ENCODE measurements at regions of chr4 and their contacts with region 1.

Region 1: DNA sequence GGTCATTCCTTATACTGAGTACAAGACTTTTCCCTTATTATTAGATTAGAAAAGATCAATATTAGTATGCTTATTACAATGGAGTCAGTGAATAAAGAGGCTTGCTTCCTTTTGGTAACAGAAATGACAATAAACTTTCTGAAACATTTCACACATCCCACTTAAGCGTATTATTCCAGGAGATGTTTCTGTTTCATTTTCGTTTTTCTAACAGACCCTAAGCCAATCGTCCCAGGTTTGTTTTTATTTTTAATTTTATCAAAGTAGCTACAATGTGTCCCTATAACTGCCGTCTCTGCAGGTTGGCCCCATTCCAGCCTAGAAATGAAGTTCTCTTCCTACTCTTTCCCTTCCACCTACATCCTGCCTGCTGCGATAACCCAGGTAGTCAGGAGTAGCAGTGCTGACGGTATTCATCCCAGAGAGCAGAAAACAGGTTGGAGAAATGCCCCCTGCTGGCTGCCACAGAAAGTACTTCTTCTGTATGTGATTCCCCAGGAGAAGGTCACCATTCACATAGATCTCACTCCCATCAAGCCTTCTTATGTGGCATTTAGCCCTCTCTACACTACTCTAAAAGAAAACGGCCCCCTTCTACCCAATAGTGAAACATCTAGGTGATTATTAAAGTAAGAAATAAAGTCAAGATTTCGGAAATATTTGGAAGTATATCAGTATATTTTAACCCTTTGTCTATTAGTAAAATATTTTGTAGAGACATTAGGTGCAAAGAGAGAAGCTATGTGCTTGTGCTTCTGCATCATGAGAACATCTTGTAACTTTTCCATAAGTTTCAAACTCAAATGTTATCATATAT is 40.4 kb downstream of the ENPEP start:
- DNase-seq: peak; percentile 21
- ATAC-seq: peak; percentile 94
- H3K4me3 Mint-ChIP-seq: peak overlapping the region; percentile 94
- H3K27ac Mint-ChIP-seq: peak overlapping the region; percentile 47
- H3K4me1 Mint-ChIP-seq: peaks cover 13% of the 10 kb centered on the region
- H3K27me3 Mint-ChIP-seq: peaks cover under 1% of the 10 kb centered on the region
- CTCF ChIP-seq: peak; percentile 59

Region 2: GRCh38 chr4:109998867-109999584 is 517.3 kb before region 1 on chr4:
- CTCF ChIA-PET with region 1: interaction called, 232 read pairs
- POLR2A ChIA-PET with region 1: no interaction called
- intact Hi-C with region 1: loop called (anchors 1 kb)
- DNase-seq: no peak
- ATAC-seq: peak; percentile 61
- H3K4me3 Mint-ChIP-seq: no peak overlapping the region
- H3K27ac Mint-ChIP-seq: no peak overlapping the region
- H3K4me1 Mint-ChIP-seq: peaks cover 9% of the 10 kb centered on the region
- H3K27me3 Mint-ChIP-seq: peaks cover 5% of the 10 kb centered on the region
- CTCF ChIP-seq: peak; percentile 66

Region 3: DNA sequence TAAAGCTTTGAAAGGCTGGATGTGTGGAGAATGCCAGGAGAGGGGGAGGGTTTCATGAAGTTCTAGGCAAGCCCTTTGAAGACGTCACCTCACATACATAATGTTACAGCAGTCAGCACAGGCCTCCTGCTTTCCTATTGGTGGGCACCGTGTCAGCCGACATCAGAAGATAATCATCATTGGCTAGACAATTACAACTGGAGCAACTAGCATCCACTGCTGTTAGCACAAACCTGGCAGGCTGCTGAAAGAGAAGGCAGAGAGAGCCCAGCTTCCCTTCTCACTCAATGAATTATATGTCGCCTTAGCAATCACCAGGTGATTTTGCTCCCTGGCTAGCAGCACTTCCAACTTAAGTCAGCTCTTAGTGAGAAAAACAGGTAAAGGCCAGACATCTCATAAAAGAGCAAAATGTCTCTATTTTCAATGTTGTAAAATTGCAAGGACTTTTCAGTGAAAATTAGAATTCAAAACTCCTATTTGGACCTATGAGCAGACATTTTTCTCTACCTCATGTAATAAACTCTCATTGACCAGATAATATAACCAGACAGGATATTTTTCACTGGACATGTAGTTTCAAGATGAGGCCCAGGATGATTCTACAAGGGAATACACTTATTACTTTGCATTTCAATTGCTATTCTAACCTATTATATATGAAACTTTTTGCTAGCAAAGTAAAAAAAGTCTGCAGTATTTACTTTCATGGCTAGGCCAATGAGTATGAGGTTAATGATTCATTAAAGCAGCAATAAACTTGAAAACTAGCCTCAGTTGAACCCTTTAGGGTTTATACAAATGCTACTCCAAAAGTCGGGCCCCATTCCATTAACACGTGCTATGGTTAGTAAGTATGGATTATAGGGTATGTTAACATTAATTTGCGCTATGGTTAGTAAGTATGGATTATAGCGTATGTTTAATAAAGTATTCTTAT is 322.2 kb before region 1 on chr4:
- CTCF ChIA-PET with region 1: no interaction called
- POLR2A ChIA-PET with region 1: no interaction called
- intact Hi-C with region 1: loop called (anchors 5 kb)
- DNase-seq: peak; percentile 31
- ATAC-seq: peak; percentile 79
- H3K4me3 Mint-ChIP-seq: peak overlapping the region; percentile 51
- H3K27ac Mint-ChIP-seq: peak overlapping the region; percentile 62
- H3K4me1 Mint-ChIP-seq: peaks cover 24% of the 10 kb centered on the region
- H3K27me3 Mint-ChIP-seq: no peaks in the 10 kb centered on the region
- CTCF ChIP-seq: no peak

Region 4: GRCh38 chr4:110344162-110344561 is 172.2 kb before region 1 on chr4:
- CTCF ChIA-PET with region 1: interaction called, 4 read pairs
- POLR2A ChIA-PET with region 1: no interaction called
- intact Hi-C with region 1: loop called (anchors 10 kb)
- DNase-seq: no peak
- ATAC-seq: no peak
- H3K4me3 Mint-ChIP-seq: no peak overlapping the region
- H3K27ac Mint-ChIP-seq: no peak overlapping the region
- H3K4me1 Mint-ChIP-seq: no peaks in the 10 kb centered on the region
- H3K27me3 Mint-ChIP-seq: no peaks in the 10 kb centered on the region
- CTCF ChIP-seq: no peak

Region 5: GRCh38 chr4:111930659-111931058 is 1414.3 kb after region 1 on chr4:
- CTCF ChIA-PET with region 1: no interaction called
- POLR2A ChIA-PET with region 1: no interaction called
- intact Hi-C with region 1: loop called (anchors 5 kb)
- DNase-seq: no peak
- ATAC-seq: peak; percentile 76
- H3K4me3 Mint-ChIP-seq: no peak overlapping the region
- H3K27ac Mint-ChIP-seq: no peak overlapping the region
- H3K4me1 Mint-ChIP-seq: peaks cover 14% of the 10 kb centered on the region
- H3K27me3 Mint-ChIP-seq: peaks cover 2% of the 10 kb centered on the region
- CTCF ChIP-seq: no peak

Measured in activated B cell treated with CpG ODN at 0.5 μM for 24 hours (primary cell).